Common myeloid progenitor, CD34-positive (primary cell): ENCODE measurements at regions of chr2 and their contacts with region 1.

Region 1: GRCh38 chr2:190511104-190511503 is 23.4 kb downstream of the NEMP2 start:
- DNase-seq: peak in 2 of 3 donors; percentile 28 to 31
- H3K4me3 ChIP-seq: no peak overlapping the region
- H3K27ac ChIP-seq: no peak overlapping the region
- H3K4me1 ChIP-seq: peaks cover 7 to 33% (median 16%) of the 10 kb centered on the region in 4 experiments
- H3K27me3 ChIP-seq: no peaks in the 10 kb centered on the region

Region 2: GRCh38 chr2:190343500-190344275 is 167.4 kb before region 1 on chr2 and contains the start of gene INPP1:
- CTCF ChIA-PET with region 1: interaction called, 10 read pairs
- POLR2A ChIA-PET with region 1: no interaction called
- DNase-seq: peak; percentile 57 to 83 (median 75)
- H3K4me3 ChIP-seq: peak within 1 kb of the TSS; percentile 49 to 85 (median 72)
- H3K27ac ChIP-seq: no peak within 1 kb of the TSS
- H3K4me1 ChIP-seq: peaks cover 9 to 23% (median 18%) of the 10 kb centered on the region in 4 experiments
- H3K27me3 ChIP-seq: no peaks in the 10 kb centered on the region

Region 3: DNA sequence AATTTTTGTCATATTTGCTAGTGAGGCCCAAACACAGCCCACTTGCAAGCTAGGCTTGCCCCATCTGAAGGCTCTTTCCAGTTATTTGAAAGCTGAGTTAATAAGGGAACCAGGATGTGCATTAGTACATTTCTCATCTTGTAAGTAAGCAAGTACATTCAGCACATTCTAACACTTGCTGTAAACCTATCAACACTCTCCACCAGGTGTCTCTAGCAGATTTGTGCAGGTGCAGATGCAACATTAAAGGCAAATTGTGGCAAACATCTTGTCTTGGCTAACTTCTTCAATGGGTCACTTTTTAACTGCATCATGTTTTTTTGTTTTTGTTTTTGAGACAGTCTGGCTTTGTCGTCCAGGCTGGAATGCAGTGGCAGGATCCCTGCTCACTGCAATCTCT is 128.3 kb before region 1 on chr2:
- CTCF ChIA-PET with region 1: interaction called, 44 read pairs
- POLR2A ChIA-PET with region 1: interaction called, 3 read pairs
- DNase-seq: peak; percentile 77 to 82 (median 80)
- H3K4me3 ChIP-seq: no peak overlapping the region
- H3K27ac ChIP-seq: no peak overlapping the region
- H3K4me1 ChIP-seq: peaks cover 0 to 10% (median 2%) of the 10 kb centered on the region in 4 experiments
- H3K27me3 ChIP-seq: no peaks in the 10 kb centered on the region

Region 4: GRCh38 chr2:190500054-190500502 is 11.0 kb before region 1 on chr2:
- CTCF ChIA-PET with region 1: interaction called, 11 read pairs
- POLR2A ChIA-PET with region 1: no interaction called
- DNase-seq: no peak
- H3K4me3 ChIP-seq: no peak overlapping the region
- H3K27ac ChIP-seq: no peak overlapping the region
- H3K4me1 ChIP-seq: no peaks in the 10 kb centered on the region
- H3K27me3 ChIP-seq: no peaks in the 10 kb centered on the region